Heart left ventricle (tissue), 16 donors: ENCODE measurements at regions of chr13 and their contacts with region 1.

Region 1: GRCh38 chr13:48580185-48580803 is 47.4 kb upstream of the RCBTB2 start:
- DNase-seq: peak in 4 of 5 donors; percentile 59 to 77 (median 68)
- ATAC-seq: peak; percentile 29 to 56 (median 44)
- H3K4me3 ChIP-seq: no peak overlapping the region
- H3K27ac ChIP-seq: peak overlapping the region in 4 of 12 donors; percentile 1 to 93 (median 37)
- H3K4me1 ChIP-seq: peaks cover 0 to 68% (median 25%) of the 10 kb centered on the region in 12 donors
- H3K27me3 ChIP-seq: no peaks in the 10 kb centered on the region
- CTCF ChIP-seq: peak; percentile 55 to 88 (median 82)
- POLR2A ChIP-seq: no peak

Region 2: DNA sequence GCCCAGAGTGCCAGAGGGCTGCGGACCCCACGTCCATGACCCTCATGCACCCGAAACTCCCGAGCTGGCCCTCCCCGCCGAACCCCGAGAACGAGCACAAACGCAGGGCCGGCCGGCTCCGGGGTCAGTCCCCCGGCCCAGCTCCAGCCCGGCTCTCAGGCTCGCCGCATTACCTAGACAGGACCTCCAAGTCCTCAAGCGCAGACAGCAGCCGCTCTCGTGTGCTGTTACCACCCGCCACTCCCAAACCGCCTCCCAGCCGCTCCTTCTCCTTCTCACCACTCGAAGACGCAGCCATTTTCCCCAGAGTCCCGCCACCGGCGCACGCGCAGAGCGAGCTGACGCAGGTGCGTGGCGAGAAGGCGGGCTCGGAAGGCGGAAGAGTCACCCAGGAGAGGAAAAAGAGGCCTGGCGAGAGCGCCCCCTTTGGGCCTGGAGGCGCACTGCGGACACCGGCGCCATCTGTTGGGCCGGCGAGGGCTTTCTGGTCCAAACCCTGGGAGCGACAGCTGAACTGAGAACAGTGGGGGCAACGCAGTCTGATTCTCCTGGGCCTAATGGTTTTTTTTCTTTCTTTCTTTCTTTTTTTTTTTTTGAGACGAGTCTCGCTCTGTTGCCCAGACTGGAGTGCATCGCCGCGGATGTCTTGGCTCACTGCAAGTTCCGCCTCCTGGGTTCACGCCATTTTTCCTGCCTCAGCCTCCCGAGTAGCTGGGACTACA is 485.4 kb before region 1 on chr13 and contains the start of gene MED4:
- intact Hi-C with region 1: loop called in 3 of 10 experiments (anchors 10 kb)
- DNase-seq: peak; percentile 95 to 98 (median 96)
- ATAC-seq: peak; percentile 94 to 99 (median 98)
- H3K4me3 ChIP-seq: peak within 1 kb of the TSS; percentile 65 to 99 (median 90)
- H3K27ac ChIP-seq: peak within 1 kb of the TSS; percentile 78 to 95 (median 88)
- H3K4me1 ChIP-seq: peaks cover 0 to 47% (median 34%) of the 10 kb centered on the region in 12 donors
- H3K27me3 ChIP-seq: no peaks in the 10 kb centered on the region
- CTCF ChIP-seq: peak; percentile 98 to 100 (median 99)
- POLR2A ChIP-seq: peak in 1 of 2 donors; percentile 77
- total RNA-seq, gene MED4: 24.9 to 50.3 (median 46.0) TPM

Region 3: DNA sequence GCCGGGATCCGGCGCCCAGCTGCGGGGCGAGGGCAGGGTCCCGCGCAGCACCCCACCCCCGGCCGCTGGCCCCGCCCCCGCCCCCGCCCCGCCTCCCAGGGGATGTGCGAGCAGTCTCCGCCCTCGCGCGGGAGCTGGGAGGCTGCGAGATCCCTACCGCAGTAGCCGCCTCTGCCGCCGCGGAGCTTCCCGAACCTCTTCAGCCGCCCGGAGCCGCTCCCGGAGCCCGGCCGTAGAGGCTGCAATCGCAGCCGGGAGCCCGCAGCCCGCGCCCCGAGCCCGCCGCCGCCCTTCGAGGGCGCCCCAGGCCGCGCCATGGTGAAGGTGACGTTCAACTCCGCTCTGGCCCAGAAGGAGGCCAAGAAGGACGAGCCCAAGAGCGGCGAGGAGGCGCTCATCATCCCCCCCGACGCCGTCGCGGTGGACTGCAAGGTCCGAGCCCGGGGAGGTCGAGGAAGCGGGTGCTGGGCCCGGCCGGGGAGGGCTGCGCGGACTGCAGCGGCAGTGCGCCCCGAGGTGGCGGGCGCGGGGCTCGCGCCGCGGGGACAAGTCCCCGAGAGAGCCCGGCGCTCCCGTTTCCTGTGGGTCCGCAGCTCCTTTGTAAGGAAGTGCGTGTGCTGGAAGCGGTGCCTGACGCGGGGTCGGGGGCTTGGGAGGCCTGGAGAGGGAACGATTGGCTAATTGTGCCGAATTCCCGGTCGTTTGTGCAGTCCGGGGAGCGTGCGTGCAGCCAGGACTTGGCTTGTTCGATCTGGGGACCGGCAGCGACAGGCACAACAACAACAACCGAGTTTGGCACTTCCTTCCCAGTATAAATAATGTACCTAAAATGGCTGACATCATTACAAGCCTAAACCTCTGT is 347.0 kb before region 1 on chr13 and contains the start of gene ITM2B:
- intact Hi-C with region 1: loop called in 5 of 10 experiments (anchors 10 kb)
- DNase-seq: peak; percentile 84 to 91 (median 87)
- ATAC-seq: peak; percentile 68 to 95 (median 88)
- H3K4me3 ChIP-seq: peak within 1 kb of the TSS; percentile 84 to 100 (median 96)
- H3K27ac ChIP-seq: peak within 1 kb of the TSS; percentile 99 to 100 (median 100)
- H3K4me1 ChIP-seq: peaks cover 6 to 59% (median 39%) of the 10 kb centered on the region in 12 donors
- H3K27me3 ChIP-seq: no peaks in the 10 kb centered on the region
- CTCF ChIP-seq: peak in 11 of 12 donors; percentile 28 to 64 (median 48)
- POLR2A ChIP-seq: peak; percentile 67 to 94
- total RNA-seq, gene ITM2B: 402 to 772 (median 504) TPM

Region 4: DNA sequence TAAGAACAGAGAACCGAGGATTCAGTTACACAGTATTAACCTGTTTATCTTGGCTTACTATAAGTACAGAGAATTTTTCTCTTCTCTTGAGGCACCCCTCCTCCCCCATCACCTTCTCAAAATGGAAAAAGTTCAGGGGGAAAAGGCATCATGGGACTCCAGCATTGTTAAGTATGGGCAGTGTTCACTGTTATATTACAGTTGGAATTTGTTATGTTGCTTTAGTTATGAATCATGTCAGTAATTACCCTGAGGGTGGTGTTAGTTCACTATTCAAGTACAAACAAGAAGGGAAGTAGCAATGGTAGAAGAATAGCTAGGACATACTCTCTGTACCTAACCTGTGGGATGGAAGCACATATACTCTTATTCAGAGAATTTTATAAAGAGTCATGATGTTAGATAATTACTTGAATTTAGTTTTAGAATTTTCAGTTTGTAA is 179.4 kb before region 1 on chr13:
- intact Hi-C with region 1: loop called in 8 of 10 experiments (anchors 5 to 10 kb)
- DNase-seq: no peak
- ATAC-seq: peak; percentile 66 to 90 (median 85)
- H3K4me3 ChIP-seq: peak overlapping the region in 7 of 12 donors; percentile 1 to 29 (median 10)
- H3K27ac ChIP-seq: peak overlapping the region; percentile 7 to 94 (median 72)
- H3K4me1 ChIP-seq: peaks cover 3 to 79% (median 42%) of the 10 kb centered on the region in 12 donors
- H3K27me3 ChIP-seq: no peaks in the 10 kb centered on the region
- CTCF ChIP-seq: peak in 5 of 12 donors; percentile 12 to 44 (median 26)
- POLR2A ChIP-seq: no peak

Region 5: GRCh38 chr13:48492470-48493065 is 87.7 kb before region 1 on chr13:
- intact Hi-C with region 1: loop called in 2 of 10 experiments (anchors 10 kb)
- DNase-seq: peak; percentile 86 to 90 (median 88)
- ATAC-seq: peak; percentile 89 to 95 (median 92)
- H3K4me3 ChIP-seq: peak overlapping the region in 10 of 12 donors; percentile 21 to 55 (median 43)
- H3K27ac ChIP-seq: peak overlapping the region; percentile 55 to 93 (median 76)
- H3K4me1 ChIP-seq: peaks cover 0 to 80% (median 24%) of the 10 kb centered on the region in 12 donors
- H3K27me3 ChIP-seq: no peaks in the 10 kb centered on the region
- CTCF ChIP-seq: no peak
- POLR2A ChIP-seq: no peak

Region 6: DNA sequence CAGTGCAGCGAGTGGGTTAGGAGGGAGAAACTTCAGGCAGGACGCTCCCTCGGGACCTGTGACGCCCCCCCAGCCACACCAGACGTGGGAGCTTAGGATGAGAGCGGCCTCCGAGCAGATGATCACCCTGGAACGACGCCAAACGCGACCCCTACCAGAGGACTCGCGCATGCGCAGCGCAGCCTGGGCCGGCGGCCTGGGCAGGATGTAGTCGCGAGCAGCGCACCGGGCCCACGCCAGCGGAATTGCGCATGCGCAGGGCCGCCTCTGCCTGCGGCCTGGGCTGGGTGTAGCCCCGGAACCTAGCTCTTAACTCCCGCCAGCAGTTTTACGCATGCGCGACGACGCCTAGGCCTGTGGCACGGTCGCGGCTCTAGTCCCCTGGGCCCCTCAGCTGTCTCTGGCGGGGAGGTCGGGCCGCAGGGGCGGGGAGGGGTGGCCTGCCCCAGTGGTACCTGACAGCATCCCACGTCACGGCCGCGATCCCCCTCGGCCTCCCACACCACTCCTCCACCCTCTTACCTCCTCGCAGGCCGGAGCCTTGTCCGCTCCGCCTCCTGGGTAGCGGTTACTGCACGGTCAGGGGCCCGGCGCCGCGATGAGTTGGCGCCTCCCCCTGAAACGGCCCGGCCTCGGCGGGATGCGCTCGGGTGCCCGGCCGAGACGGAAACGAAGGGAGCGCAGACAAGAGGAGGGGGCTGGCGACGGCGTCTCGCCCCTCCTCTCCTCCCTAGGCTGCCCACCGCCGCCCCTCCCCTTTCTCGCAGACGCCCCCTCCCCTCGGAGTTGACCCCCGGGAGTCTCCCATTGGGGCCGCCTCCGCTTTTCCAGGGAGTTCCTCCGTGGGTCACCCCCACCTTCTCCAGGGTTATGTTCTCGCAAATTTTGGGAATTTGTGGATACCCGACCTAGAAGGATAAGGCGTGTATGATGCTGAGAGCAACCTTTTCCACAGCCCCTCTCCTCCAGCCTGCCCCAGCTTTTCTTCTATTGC is 47.5 kb before region 1 on chr13 and contains the start of gene RCBTB2:
- intact Hi-C with region 1: loop called in 1 of 10 experiments (anchors 5 kb)
- DNase-seq: peak; percentile 99 to 100 (median 99)
- ATAC-seq: peak; percentile 97 to 98 (median 97)
- H3K4me3 ChIP-seq: peak within 1 kb of the TSS; percentile 33 to 90 (median 72)
- H3K27ac ChIP-seq: peak within 1 kb of the TSS; percentile 95 to 99 (median 98)
- H3K4me1 ChIP-seq: peaks cover 0 to 73% (median 20%) of the 10 kb centered on the region in 12 donors
- H3K27me3 ChIP-seq: no peaks in the 10 kb centered on the region
- CTCF ChIP-seq: peak in 1 of 12 donors; percentile 10
- POLR2A ChIP-seq: peak in 1 of 2 donors; percentile 87
- total RNA-seq, gene RCBTB2: 5.9 to 16.2 (median 11.8) TPM

Region 7: DNA sequence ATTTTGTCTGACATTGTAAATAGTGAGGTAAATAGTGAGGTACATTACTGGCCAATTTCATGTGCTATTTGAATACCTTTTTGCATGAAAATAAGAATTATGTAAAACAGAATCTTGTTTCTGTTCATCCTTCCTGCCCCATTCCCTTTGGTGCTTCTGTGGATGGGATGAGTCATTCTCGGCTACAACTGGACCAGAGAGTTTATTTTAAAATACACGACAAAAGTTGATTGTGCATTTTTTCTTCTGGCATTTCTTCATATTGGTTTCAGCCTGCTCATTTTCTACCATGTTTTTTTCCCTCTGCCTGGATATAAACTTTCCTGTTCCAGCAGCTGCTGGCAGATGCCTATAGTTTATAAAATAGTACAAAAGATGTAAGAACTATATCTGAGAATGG is 181.0 kb after region 1 on chr13:
- intact Hi-C with region 1: no loop called
- DNase-seq: no peak
- ATAC-seq: no peak
- H3K4me3 ChIP-seq: no peak overlapping the region
- H3K27ac ChIP-seq: no peak overlapping the region
- H3K4me1 ChIP-seq: no peaks in the 10 kb centered on the region
- H3K27me3 ChIP-seq: no peaks in the 10 kb centered on the region
- CTCF ChIP-seq: no peak
- POLR2A ChIP-seq: no peak